Heart right ventricle (tissue), 16 donors: ENCODE measurements at regions of chr1 and their contacts with region 1.

Region 1: GRCh38 chr1:21659099-21659923 is 9.8 kb downstream of the RAP1GAP start:
- DNase-seq: peak; percentile 67 to 75
- ATAC-seq: peak; percentile 77 to 90 (median 82)
- H3K4me3 ChIP-seq: peak overlapping the region in 3 of 10 donors; percentile 8 to 35 (median 31)
- H3K27ac ChIP-seq: no peak overlapping the region
- H3K4me1 ChIP-seq: peaks cover 0 to 20% (median 5%) of the 10 kb centered on the region in 9 donors
- H3K27me3 ChIP-seq: peaks cover 0 to 20% (median 0%) of the 10 kb centered on the region in 7 donors
- CTCF ChIP-seq: peak; percentile 93 to 98 (median 95)

Region 2: DNA sequence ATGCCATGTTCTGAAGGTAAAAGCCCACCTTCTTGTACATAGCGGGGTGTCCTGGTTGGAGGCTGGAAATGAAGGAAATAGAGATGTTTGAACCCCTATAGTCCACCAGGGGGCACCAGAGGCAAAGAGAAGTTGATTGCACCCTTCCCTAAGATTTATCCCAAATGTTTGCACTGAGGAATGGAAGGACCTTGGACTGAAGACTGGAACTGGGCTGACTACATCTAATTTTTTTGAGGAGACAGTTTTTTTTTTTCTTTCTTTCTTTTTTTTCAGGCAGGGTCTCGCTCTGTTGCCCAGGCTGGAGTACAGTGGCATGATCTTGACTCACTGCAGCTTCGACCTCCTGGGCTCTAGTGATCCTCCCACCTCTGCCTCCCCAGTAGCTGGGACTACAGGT is 427.3 kb before region 1 on chr1:
- intact Hi-C with region 1: loop called in 6 of 10 experiments (anchors 5 to 10 kb)
- DNase-seq: peak in 1 of 2 donors; percentile 58
- ATAC-seq: peak; percentile 51 to 75 (median 67)
- H3K4me3 ChIP-seq: no peak overlapping the region
- H3K27ac ChIP-seq: no peak overlapping the region
- H3K4me1 ChIP-seq: peaks cover 0 to 16% (median 3%) of the 10 kb centered on the region in 9 donors
- H3K27me3 ChIP-seq: no peaks in the 10 kb centered on the region
- CTCF ChIP-seq: peak; percentile 72 to 87 (median 77)

Region 3: GRCh38 chr1:21378705-21379494 is 280.4 kb before region 1 on chr1:
- intact Hi-C with region 1: loop called in 7 of 10 experiments (anchors 5 to 10 kb)
- DNase-seq: no peak
- ATAC-seq: no peak
- H3K4me3 ChIP-seq: no peak overlapping the region
- H3K27ac ChIP-seq: no peak overlapping the region
- H3K4me1 ChIP-seq: no peaks in the 10 kb centered on the region
- H3K27me3 ChIP-seq: peaks cover 0 to 56% (median 11%) of the 10 kb centered on the region in 7 donors
- CTCF ChIP-seq: no peak

Region 4: GRCh38 chr1:21508580-21509350 is 150.5 kb before region 1 on chr1:
- intact Hi-C with region 1: loop called in 9 of 10 experiments (anchors 2 to 10 kb)
- DNase-seq: peak; percentile 68 to 77
- ATAC-seq: peak; percentile 78 to 89 (median 85)
- H3K4me3 ChIP-seq: peak overlapping the region in 9 of 10 donors; percentile 29 to 60 (median 52)
- H3K27ac ChIP-seq: peak overlapping the region in 3 of 10 donors; percentile 17 to 70 (median 47)
- H3K4me1 ChIP-seq: peaks cover 10 to 43% (median 23%) of the 10 kb centered on the region in 9 donors
- H3K27me3 ChIP-seq: peaks cover 0 to 49% (median 20%) of the 10 kb centered on the region in 7 donors
- CTCF ChIP-seq: peak; percentile 47 to 73 (median 64)

Region 5: GRCh38 chr1:21607549-21608529 is 51.5 kb before region 1 on chr1:
- intact Hi-C with region 1: no loop called
- DNase-seq: peak; percentile 82 to 83
- ATAC-seq: peak; percentile 76 to 93 (median 84)
- H3K4me3 ChIP-seq: peak overlapping the region in 1 of 10 donors; percentile 14
- H3K27ac ChIP-seq: no peak overlapping the region
- H3K4me1 ChIP-seq: peaks cover 0 to 3% (median 0%) of the 10 kb centered on the region in 9 donors
- H3K27me3 ChIP-seq: peaks cover 0 to under 1% (median 0%) of the 10 kb centered on the region in 7 donors
- CTCF ChIP-seq: no peak